Mammary epithelial cell (primary cell): ENCODE measurements at regions of chr17 and their contacts with region 1.

Region 1: DNA sequence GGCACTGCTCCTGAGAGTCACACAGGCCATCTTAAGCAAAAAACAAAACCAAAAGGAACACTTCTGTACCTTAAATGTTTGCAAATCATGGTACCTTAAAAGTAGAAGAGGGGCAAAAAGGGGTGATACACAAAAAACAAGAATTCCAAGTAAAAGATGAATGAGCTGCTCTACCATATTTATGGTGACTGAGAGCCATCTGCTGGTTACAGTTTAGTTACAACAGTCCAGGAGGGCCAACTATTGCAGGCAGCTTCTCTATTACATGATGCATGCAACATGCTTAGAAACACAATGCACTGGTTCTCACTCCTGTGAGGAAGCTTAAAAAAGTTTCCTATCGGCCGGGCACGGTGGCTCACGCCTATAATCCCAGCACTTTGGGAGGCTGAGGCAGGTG is 53.5 kb downstream of the STX8 start:
- DNase-seq: peak; percentile 14
- H3K4me3 ChIP-seq: no peak overlapping the region
- H3K27ac ChIP-seq: no peak overlapping the region
- H3K4me1 ChIP-seq: no peaks in the 10 kb centered on the region
- H3K27me3 ChIP-seq: no peaks in the 10 kb centered on the region
- CTCF ChIP-seq: peak; percentile 39 to 56

Region 2: GRCh38 chr17:9228408-9229151 is 293.5 kb before region 1 on chr17:
- CTCF ChIA-PET with region 1: interaction called, 10 read pairs
- dilution Hi-C with region 1: no loop called
- in situ Hi-C with region 1: no loop called
- intact Hi-C with region 1: no loop called
- DNase-seq: peak; percentile 36
- H3K4me3 ChIP-seq: no peak overlapping the region
- H3K27ac ChIP-seq: no peak overlapping the region
- H3K4me1 ChIP-seq: no peaks in the 10 kb centered on the region
- H3K27me3 ChIP-seq: no peaks in the 10 kb centered on the region
- CTCF ChIP-seq: no peak

Region 3: GRCh38 chr17:9291912-9292560 is 230.0 kb before region 1 on chr17:
- CTCF ChIA-PET with region 1: no interaction called
- dilution Hi-C with region 1: no loop called
- in situ Hi-C with region 1: no loop called
- intact Hi-C with region 1: loop called (anchors 5 kb)
- DNase-seq: no peak
- H3K4me3 ChIP-seq: no peak overlapping the region
- H3K27ac ChIP-seq: no peak overlapping the region
- H3K4me1 ChIP-seq: peaks cover 9% of the 10 kb centered on the region
- H3K27me3 ChIP-seq: no peaks in the 10 kb centered on the region
- CTCF ChIP-seq: peak; percentile 49 to 69

Region 4: DNA sequence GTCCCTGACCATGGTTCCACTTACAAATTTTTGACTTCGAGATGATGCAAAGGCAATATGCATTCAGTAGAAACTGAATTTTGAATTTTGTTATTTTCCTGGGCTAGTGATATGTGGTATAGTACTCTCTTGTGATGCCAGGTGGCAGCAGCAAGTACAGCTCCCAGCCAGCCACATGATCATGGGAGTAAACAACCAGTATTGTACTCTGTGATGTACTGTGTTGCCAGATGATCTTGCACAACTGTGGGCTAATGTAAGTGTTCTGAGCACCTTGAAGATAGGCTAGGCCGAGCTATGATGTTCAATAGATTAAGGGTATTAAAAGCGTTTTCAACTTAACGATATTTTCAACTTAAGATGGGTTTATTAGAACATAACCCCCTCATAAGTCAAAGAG is 197.2 kb before region 1 on chr17:
- CTCF ChIA-PET with region 1: no interaction called
- dilution Hi-C with region 1: no loop called
- in situ Hi-C with region 1: no loop called
- intact Hi-C with region 1: loop called (anchors 1 kb)
- DNase-seq: peak; percentile 21
- H3K4me3 ChIP-seq: no peak overlapping the region
- H3K27ac ChIP-seq: no peak overlapping the region
- H3K4me1 ChIP-seq: no peaks in the 10 kb centered on the region
- H3K27me3 ChIP-seq: no peaks in the 10 kb centered on the region
- CTCF ChIP-seq: peak in 1 of 2 donors; percentile 5